Panc1 (cell line): ENCODE measurements at regions of chr17 and their contacts with region 1.

Region 1: GRCh38 chr17:65556014-65556909 is 5.2 kb downstream of the AXIN2 start:
- DNase-seq: peak; percentile 33
- ATAC-seq: peak; percentile 60; the same call in 1 of the 2 replicates
- H3K4me3 ChIP-seq: 0 out of 4 replicates have a peak overlapping the region, but pooled peaks of 1 of the 2 experiments have one; percentile 4
- H3K27ac ChIP-seq: no peak overlapping the region
- H3K4me1 ChIP-seq: peaks cover 3% of the 10 kb centered on the region; the same call in 1 of the 2 replicates
- H3K27me3 ChIP-seq: no peaks in the 10 kb centered on the region
- CTCF ChIP-seq: peak; percentile 87

Region 2: DNA sequence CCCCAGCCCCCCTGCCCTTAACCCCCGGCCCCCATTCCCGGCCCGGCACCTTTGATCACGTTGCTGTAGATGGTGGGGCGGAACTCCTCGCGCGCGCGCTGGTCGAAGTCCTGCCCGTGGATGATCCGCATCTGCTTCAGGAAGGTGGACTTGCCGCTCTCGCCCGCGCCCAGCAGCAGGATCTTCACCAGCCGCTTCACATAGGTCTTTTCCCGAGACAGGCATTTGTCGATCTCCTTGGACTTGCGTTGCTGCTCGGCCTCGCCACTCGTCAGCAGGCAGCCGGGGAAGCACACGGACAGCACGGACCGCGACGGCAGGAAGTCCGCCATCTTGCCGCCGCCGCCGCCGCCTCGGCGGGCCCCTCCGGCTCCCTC is 500.0 kb before region 1 on chr17:
- CTCF ChIA-PET with region 1: interaction called, 11 read pairs
- POLR2A ChIA-PET with region 1: no interaction called
- in situ Hi-C with region 1: no loop called
- intact Hi-C with region 1: no loop called
- DNase-seq: no peak
- ATAC-seq: no peak
- H3K4me3 ChIP-seq: peak overlapping the region; percentile 69 to 94
- H3K27ac ChIP-seq: peak overlapping the region; percentile 70
- H3K4me1 ChIP-seq: peaks cover 14% of the 10 kb centered on the region; the same call in 1 of the 2 replicates
- H3K27me3 ChIP-seq: no peaks in the 10 kb centered on the region
- CTCF ChIP-seq: no peak

Region 3: DNA sequence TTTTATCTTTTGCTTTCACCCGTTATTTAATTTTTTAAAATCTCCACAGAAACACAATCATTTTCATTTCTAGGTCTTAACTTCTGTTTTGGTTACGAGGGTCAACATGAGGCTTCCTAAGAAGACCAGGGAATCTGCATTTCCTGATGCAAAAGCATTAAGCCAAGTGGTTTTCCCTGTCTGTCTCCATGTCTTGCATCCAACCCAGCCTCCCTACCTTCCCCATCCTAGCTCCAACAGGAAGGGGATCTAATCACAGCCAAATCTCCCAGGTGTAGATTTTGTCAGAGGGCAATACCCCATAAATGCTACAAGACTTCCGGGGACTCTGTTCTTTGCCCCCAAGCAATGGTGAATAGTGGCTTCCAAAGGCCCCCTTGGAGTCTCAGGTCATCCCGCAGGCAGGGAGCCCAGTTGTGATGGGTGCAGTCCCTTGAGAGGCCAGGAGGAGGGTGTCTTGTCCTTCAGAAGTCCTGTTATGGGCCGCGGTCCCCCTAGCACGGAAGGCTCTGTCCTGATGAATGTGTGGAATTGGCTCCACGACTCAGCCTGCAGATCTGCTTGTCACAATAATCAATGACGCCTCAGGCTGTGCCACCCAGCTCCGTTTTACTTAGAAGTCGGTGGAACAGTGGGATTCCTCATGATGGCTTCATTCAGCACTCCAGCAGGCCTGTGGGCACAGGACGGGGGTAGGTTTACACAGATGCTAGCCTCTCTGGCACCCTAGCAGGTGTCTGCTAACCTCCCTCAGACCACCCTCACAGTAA is 278.0 kb before region 1 on chr17:
- CTCF ChIA-PET with region 1: no interaction called
- POLR2A ChIA-PET with region 1: no interaction called
- in situ Hi-C with region 1: no loop called
- intact Hi-C with region 1: loop called (anchors 5 kb)
- DNase-seq: no peak
- ATAC-seq: peak; percentile 95
- H3K4me3 ChIP-seq: no peak overlapping the region
- H3K27ac ChIP-seq: no peak overlapping the region
- H3K4me1 ChIP-seq: peaks cover 3% of the 10 kb centered on the region; the same call in 1 of the 2 replicates
- H3K27me3 ChIP-seq: no peaks in the 10 kb centered on the region; the same call in 1 of the 2 replicates
- CTCF ChIP-seq: peak; percentile 70

Region 4: DNA sequence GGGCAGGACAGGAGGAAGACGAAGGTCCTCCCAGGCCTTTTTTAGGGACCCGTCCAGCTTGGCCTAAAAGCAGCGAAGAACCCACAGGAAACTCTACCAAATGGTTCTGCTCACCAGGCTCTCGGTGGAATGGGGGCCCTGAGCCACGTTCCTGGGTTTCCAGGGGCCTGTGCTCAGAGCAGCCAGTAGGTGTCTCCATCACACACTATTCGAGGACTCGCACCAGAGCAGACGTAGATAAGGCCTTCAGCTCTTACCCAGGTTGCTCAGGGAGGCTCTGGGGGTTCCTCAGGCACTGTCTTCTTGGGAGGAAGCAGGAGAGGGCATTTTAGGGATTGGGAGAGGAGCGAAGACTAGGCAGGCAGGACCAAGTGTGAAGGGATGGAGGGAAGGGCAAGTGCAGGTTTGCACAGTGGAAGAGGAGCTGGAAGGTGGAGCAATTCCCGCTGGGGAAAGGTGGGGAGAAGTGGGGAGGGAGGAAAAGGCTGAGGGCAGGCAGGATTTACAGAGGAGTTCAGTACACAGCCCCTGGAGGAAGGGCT is 262.0 kb before region 1 on chr17:
- CTCF ChIA-PET with region 1: no interaction called
- POLR2A ChIA-PET with region 1: no interaction called
- in situ Hi-C with region 1: no loop called
- intact Hi-C with region 1: loop called (anchors 5 kb)
- DNase-seq: peak; percentile 18
- ATAC-seq: peak; percentile 93
- H3K4me3 ChIP-seq: no peak overlapping the region
- H3K27ac ChIP-seq: no peak overlapping the region
- H3K4me1 ChIP-seq: no peaks in the 10 kb centered on the region
- H3K27me3 ChIP-seq: no peaks in the 10 kb centered on the region
- CTCF ChIP-seq: peak; percentile 82

Region 5: DNA sequence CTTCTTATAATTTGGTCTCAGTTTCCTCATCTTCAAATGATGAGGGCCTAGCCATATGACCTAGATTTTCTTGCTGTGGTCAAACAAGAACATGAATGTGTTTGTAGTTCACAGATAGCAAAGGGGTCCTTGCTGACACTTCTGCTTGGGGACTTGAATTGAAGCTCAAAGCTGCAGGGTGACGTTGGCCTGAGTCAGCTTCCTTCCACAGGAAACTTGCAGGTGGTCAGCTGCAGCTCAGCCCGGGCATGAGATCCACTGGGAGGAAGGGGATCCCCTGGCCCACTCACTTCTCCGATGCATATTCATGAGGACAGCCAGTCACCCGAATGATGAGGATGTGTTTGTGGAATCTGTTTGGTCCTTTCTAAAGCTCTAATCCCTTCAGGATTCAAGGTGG is 47.8 kb after region 1 on chr17:
- CTCF ChIA-PET with region 1: no interaction called
- POLR2A ChIA-PET with region 1: no interaction called
- in situ Hi-C with region 1: no loop called
- intact Hi-C with region 1: no loop called
- DNase-seq: no peak
- ATAC-seq: no peak
- H3K4me3 ChIP-seq: no peak overlapping the region
- H3K27ac ChIP-seq: no peak overlapping the region
- H3K4me1 ChIP-seq: no peaks in the 10 kb centered on the region
- H3K27me3 ChIP-seq: no peaks in the 10 kb centered on the region
- CTCF ChIP-seq: no peak